GM10248 (cell line): ENCODE measurements at regions of chr4 and their contacts with region 1.

Region 1: DNA sequence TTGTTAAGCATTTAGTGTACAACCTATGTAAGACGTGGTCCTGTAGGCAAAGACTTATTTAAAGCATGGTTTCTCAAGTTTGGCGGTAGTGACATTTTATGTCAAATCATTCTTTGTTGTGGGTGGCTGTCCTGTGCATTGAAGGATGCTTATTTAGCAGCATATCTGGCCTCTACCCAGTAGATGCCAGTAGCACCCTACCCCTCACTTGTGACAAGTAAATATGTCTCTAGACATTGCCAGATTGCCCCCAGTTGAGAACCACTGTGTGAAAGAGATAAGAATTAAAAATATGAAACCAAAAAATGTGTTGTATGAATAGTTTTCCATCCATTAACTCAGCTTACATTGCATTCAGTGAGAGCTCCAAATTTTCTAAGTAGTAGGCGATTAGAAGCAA is 25.5 kb downstream of the MMAA start:
- DNase-seq: no peak
- CTCF ChIP-seq: no peak

Region 2: DNA sequence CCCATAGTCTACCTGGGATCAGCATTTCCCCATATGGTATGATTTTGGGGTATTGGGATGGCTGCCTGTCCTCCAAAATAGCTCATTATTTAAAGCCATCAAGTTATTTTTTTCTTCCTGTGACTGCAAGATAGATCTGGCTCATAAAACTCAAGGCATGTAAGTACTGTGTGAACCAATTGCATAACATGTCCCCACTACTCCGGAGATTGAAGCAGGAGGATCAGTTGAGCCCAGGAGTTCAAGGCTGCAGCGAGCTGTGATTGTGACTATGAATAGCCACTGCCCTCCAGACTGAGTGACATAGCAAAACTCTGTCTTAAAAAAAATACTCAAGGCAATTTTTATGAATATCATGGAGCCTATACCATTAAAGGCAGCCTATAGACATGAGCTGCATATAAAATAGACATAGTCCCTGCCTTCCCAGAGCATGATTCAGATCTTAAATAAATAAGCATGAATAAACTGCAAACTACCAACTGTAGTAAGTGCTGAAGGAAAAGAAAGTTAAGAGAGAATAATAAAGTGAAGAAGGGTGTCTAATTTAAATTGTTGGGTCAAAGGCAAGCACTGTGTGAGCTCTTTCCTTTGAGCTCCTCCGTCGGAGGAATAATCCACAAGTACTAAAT is 42.5 kb before region 1 on chr4:
- CTCF ChIA-PET with region 1: no interaction called
- POLR2A ChIA-PET with region 1: no interaction called
- DNase-seq: no peak
- CTCF ChIP-seq: no peak

Region 3: DNA sequence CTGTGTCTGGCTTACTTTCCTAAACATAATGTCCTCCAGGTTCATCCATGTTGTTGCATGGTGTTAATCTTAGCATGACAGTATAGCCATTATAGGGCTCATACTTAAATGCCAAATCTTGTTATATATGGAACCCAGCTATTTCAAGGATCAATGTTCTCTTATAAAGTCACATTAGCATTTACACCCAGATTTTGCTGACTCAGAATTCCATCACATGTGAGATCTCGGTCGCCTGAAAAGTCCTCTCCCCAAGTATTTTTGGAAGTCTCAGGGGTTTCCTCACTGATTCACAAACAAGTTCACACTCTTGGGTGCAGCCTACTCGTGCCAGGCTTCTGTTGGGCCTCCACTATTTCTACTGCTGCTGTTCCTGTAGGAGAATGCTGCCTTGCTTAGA is 15.4 kb after region 1 on chr4:
- CTCF ChIA-PET with region 1: interaction called, 33 read pairs
- POLR2A ChIA-PET with region 1: no interaction called
- DNase-seq: no peak
- CTCF ChIP-seq: no peak